ENCODE measurements at regions of chr3 and their contacts with region 1.

Region 1: DNA sequence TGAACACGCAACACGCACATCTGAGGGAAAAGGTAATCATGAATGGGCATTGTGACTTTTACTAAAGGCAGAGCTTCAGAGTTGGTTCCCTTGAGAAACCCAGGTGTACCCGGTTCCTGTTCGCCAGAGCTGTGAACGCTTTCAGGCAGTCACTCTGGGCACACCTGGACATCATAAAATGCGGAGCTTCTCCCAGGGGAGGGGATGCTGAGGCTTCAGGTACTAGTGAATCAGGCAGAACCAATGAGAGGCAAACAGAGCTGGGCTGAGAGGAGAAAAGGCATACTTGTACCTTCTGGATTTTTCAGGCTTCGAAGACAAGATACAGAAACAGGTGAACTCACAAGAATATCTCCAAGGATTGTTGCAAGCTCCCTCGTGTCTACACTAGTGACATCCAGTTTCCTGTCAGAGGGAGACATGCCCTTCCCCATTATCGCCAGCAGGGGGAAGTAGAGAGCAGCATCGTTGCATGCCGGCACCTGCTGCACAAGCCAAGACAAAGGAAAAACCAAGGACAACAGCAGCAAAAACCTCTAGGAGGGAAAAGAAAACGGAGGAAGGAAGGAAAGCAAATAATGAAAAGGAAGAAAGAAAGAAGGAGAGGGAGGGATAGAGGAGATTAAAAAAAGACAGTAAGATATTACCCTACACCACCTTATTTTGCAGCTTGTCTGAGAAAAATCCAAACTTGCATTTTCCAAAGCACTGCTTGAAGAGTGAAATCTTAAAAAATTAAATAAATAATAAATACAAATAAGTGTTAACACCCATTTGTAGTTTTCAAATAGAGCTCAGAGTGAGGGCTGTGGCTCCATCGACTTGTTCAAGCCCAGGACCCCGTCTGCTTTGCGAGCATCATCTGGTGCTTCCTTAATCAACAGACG is 2.0 kb downstream of the AHSG start:
- DNase-seq: peak; percentile 75 to 87
- H3K4me3 ChIP-seq: peak overlapping the region; percentile 33
- H3K4me3 Mint-ChIP-seq: peak overlapping the region; percentile 6
- H3K27ac Mint-ChIP-seq: peak overlapping the region; percentile 6
- H3K4me1 ChIP-seq: peaks cover 14% of the 10 kb centered on the region; the same call in 1 of the 2 replicates
- H3K4me1 Mint-ChIP-seq: peaks cover 26% of the 10 kb centered on the region
- H3K27me3 ChIP-seq: no peaks in the 10 kb centered on the region
- H3K27me3 Mint-ChIP-seq: no peaks in the 10 kb centered on the region
- CTCF ChIP-seq: peak; percentile 93 to 94

Region 2: GRCh38 chr3:186551387-186551786 is 63.5 kb before region 1 on chr3:
- CTCF ChIA-PET with region 1: no interaction called
- POLR2A ChIA-PET with region 1: no interaction called
- intact Hi-C with region 1: loop called (anchors 1 kb)
- DNase-seq: no peak
- H3K4me3 ChIP-seq: no peak overlapping the region
- H3K4me3 Mint-ChIP-seq: no peak overlapping the region
- H3K27ac Mint-ChIP-seq: no peak overlapping the region
- H3K4me1 ChIP-seq: no peaks in the 10 kb centered on the region
- H3K4me1 Mint-ChIP-seq: no peaks in the 10 kb centered on the region
- H3K27me3 ChIP-seq: no peaks in the 10 kb centered on the region
- H3K27me3 Mint-ChIP-seq: no peaks in the 10 kb centered on the region
- CTCF ChIP-seq: peak in 1 of 2 experiments; percentile 16

Region 3: DNA sequence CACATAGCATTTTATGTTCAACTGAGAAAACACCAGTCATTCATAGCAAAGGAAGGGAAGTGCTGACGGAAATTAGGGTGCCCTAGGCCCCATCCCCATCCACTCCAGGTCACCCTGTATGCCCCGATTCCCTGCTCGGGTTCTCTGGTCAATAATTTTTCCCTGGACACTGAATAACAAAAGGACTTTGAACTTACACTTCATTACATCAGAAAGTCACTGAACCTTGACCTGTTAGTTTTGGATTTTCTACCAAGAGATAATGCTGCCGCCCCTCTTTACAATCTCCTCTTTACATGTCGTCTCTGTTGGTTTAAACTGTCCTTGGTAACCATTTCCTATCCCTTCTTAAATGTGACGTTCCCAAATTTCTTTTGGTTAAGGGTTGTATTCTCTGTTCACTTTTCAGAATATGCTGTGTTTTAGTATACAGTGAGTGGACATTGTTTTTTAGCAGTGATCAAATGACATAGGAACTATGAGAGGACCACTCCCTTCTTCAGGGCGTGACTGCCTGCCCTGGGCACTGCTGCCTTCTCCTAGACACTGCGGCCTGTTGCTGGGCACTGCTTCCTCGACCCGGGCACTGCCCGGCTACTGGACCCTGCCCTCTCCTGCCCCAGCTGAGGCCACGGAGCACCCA is 15.6 kb before region 1 on chr3:
- CTCF ChIA-PET with region 1: interaction called, 5 read pairs
- POLR2A ChIA-PET with region 1: no interaction called
- intact Hi-C with region 1: loop called (anchors 1 kb)
- DNase-seq: peak in 1 of 2 experiments; percentile 60
- H3K4me3 ChIP-seq: no peak overlapping the region
- H3K4me3 Mint-ChIP-seq: peak overlapping the region; percentile 50
- H3K27ac Mint-ChIP-seq: peak overlapping the region; percentile 96
- H3K4me1 ChIP-seq: peaks cover 75% of the 10 kb centered on the region
- H3K4me1 Mint-ChIP-seq: peaks cover 70% of the 10 kb centered on the region
- H3K27me3 ChIP-seq: no peaks in the 10 kb centered on the region
- H3K27me3 Mint-ChIP-seq: no peaks in the 10 kb centered on the region
- CTCF ChIP-seq: no peak

Region 4: DNA sequence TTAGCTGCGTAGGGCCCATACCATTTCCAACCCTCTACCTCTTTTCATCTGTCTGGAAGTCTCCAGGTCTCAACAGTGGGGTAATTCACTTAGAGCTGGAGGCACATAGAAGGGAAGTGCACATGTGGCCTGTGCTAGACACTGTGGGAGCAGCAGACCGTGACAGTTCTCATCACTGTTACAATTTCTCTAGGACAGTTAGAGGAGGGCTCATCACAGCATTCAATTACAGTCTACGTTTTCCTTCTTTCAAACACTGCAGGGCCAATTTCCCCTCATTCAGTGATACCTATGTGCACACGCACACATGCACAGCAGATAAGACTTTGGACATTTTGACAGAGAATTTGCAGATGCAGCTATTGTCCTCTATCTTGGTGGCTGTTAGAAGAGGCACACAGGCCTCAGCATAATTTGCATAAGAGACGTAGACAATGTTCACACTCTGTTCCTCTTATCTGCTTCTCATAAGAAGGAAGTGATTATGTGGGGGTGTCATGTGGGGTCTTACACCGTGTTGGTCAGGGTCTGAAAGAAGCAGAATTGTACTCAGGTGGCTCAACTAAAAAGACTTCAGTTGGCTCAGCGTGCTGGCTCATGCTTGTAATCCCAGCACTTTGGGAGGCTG is 38.4 kb after region 1 on chr3:
- CTCF ChIA-PET with region 1: no interaction called
- POLR2A ChIA-PET with region 1: no interaction called
- intact Hi-C with region 1: no loop called
- DNase-seq: no peak
- H3K4me3 ChIP-seq: no peak overlapping the region
- H3K4me3 Mint-ChIP-seq: no peak overlapping the region
- H3K27ac Mint-ChIP-seq: no peak overlapping the region
- H3K4me1 ChIP-seq: 0 out of 2 replicates have a peak, but pooled peaks cover 3% of the 10 kb centered on the region
- H3K4me1 Mint-ChIP-seq: peaks cover 7% of the 10 kb centered on the region
- H3K27me3 ChIP-seq: no peaks in the 10 kb centered on the region
- H3K27me3 Mint-ChIP-seq: no peaks in the 10 kb centered on the region
- CTCF ChIP-seq: no peak

Region 5: DNA sequence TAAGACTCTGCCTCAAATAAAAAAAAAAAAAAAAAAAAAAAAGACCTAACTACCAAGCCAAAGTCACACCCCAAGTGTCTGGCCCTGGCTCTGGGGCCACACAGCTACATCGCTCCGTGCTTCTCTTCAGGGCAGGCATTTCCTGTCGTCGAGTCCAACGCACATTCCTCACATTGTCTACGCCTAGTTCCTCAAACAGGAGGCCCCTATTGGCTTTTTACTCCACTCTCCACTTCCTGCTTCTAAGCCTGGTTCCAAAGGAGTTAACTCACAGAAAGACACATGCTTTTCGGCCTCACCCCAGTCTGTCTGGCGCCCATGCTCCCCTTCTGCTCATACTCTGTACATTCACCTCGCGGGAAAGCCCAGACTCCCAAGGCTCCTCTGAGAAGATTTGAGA is 131.2 kb after region 1 on chr3:
- CTCF ChIA-PET with region 1: interaction called, 10 read pairs
- POLR2A ChIA-PET with region 1: interaction called, 3 read pairs
- intact Hi-C with region 1: no loop called
- DNase-seq: peak; percentile 88 to 93
- H3K4me3 ChIP-seq: no peak overlapping the region
- H3K4me3 Mint-ChIP-seq: peak overlapping the region; percentile 62
- H3K27ac Mint-ChIP-seq: peak overlapping the region; percentile 95
- H3K4me1 ChIP-seq: peaks cover 50% of the 10 kb centered on the region
- H3K4me1 Mint-ChIP-seq: peaks cover 44% of the 10 kb centered on the region
- H3K27me3 ChIP-seq: no peaks in the 10 kb centered on the region
- H3K27me3 Mint-ChIP-seq: no peaks in the 10 kb centered on the region
- CTCF ChIP-seq: no peak

Region 6: GRCh38 chr3:186821429-186822367 is 206.9 kb after region 1 on chr3:
- CTCF ChIA-PET with region 1: interaction called, 4 read pairs
- POLR2A ChIA-PET with region 1: no interaction called
- intact Hi-C with region 1: loop called (anchors 1 kb)
- DNase-seq: peak in 1 of 2 experiments; percentile 47
- H3K4me3 ChIP-seq: no peak overlapping the region
- H3K4me3 Mint-ChIP-seq: no peak overlapping the region
- H3K27ac Mint-ChIP-seq: no peak overlapping the region
- H3K4me1 ChIP-seq: no peaks in the 10 kb centered on the region
- H3K4me1 Mint-ChIP-seq: peaks cover 5% of the 10 kb centered on the region
- H3K27me3 ChIP-seq: no peaks in the 10 kb centered on the region
- H3K27me3 Mint-ChIP-seq: no peaks in the 10 kb centered on the region
- CTCF ChIP-seq: peak; percentile 58 to 62

Region 7: DNA sequence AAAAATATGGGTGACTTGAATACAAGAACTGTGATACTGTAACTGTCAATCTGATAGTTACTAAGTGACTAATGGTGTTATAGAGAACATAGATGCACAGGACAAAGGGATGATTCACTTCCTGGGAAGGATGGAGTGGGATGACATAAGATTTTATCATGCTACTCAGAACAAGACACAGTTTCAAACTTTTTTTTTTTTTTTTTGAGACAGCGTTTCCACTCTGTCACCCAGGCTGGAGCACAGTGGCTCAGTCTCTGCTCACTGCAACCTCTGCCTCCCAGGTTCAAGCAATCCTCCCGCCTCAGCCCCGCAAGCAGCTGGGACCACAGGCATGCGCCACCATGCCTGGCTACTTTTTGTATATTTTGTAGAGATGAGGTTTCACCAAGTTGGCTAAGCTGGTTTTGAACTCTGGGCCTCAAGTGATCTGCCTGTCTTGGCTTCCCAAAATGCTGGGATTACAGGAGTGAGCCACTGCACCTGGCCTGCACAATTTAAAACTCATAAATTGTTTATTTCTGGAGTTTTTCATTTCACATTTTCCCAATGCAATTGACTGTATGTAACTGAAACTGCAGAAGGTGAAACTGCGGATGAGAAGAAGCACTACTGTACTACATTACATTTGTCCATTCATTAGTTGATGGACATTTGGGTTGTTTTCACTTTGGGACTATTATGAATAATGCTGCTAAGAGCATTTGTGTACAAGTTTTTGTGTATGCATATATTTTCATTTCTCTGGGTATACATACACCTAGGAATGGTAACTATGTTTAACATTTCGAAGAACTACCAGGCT is 268.2 kb after region 1 on chr3:
- CTCF ChIA-PET with region 1: no interaction called
- POLR2A ChIA-PET with region 1: no interaction called
- intact Hi-C with region 1: no loop called
- DNase-seq: no peak
- H3K4me3 ChIP-seq: no peak overlapping the region
- H3K4me3 Mint-ChIP-seq: no peak overlapping the region
- H3K27ac Mint-ChIP-seq: no peak overlapping the region
- H3K4me1 ChIP-seq: no peaks in the 10 kb centered on the region; the same call in 1 of the 2 replicates
- H3K4me1 Mint-ChIP-seq: no peaks in the 10 kb centered on the region
- H3K27me3 ChIP-seq: no peaks in the 10 kb centered on the region
- H3K27me3 Mint-ChIP-seq: no peaks in the 10 kb centered on the region
- CTCF ChIP-seq: no peak